ENCODE measurements at regions of chr3 and their contacts with region 1.

Region 1: GRCh38 chr3:28241221-28242160 is at the start of gene CMC1:
- DNase-seq: peak; percentile 95
- ATAC-seq: peak; percentile 98
- H3K4me3 ChIP-seq: peak within 1 kb of the TSS; percentile 70 to 86 (median 84)
- H3K27ac ChIP-seq: peak within 1 kb of the TSS; percentile 82
- H3K4me1 ChIP-seq: peaks cover 61% of the 10 kb centered on the region
- H3K27me3 ChIP-seq: no peaks in the 10 kb centered on the region; a peak in 1 of 5 replicates
- CTCF ChIP-seq: peak; percentile 42; the same call in 1 of the 2 replicates
- EP300 ChIP-seq: peak in 1 of 2 experiments; percentile 54; a peak in 2 of 4 replicates
- POLR2A ChIP-seq: peak; percentile 95 to 97
- RAD21 ChIP-seq: 0 out of 2 replicates have a peak, but pooled peaks have one; percentile 16
- total RNA-seq, gene CMC1: 29.5 and 32.3 TPM in 2 replicates

Region 2: GRCh38 chr3:28114893-28115292 is 126.6 kb before region 1 on chr3:
- CTCF ChIA-PET with region 1: no interaction called
- POLR2A ChIA-PET with region 1: interaction called, 4 read pairs
- in situ Hi-C with region 1: no loop called
- intact Hi-C with region 1: loop called (anchors 2 kb)
- DNase-seq: peak; percentile 90
- ATAC-seq: peak; percentile 100
- H3K4me3 ChIP-seq: no peak overlapping the region
- H3K27ac ChIP-seq: peak overlapping the region; percentile 47
- H3K4me1 ChIP-seq: peaks cover 38% of the 10 kb centered on the region
- H3K27me3 ChIP-seq: no peaks in the 10 kb centered on the region
- CTCF ChIP-seq: no peak
- EP300 ChIP-seq: peak in 1 of 2 experiments; percentile 93; a peak in 2 of 4 replicates
- POLR2A ChIP-seq: no peak
- RAD21 ChIP-seq: no peak

Region 3: DNA sequence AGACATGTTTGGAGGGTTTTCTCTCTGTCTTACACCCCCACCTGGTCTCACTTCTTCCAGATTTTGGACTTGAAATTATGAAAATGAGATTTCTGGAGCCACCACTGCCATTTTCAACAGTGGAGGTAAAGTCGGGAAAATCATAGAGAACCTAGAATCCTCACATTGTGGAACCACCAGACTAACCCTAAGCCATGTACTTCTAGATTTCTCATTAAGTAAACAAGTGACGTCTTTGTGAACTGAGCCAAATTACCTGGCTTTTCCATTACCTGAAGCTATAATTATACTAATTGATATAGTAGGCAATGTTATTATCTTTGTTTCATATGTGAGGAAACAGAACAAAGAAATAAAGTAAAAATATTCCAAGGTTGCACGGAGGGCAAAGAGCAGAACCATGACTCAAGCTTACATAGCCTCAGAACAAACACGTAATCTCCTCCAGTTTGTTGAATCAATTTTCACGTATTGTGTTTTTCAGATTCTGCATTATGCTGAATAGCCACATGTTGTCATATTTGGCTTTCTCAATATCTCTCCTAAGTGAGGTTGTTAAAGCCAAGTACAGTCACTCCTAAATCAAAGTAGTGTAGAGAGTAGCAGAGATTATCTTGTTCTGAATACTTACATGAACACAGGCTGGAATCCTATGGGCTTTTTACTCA is 101.4 kb before region 1 on chr3:
- CTCF ChIA-PET with region 1: no interaction called
- POLR2A ChIA-PET with region 1: interaction called, 4 read pairs
- in situ Hi-C with region 1: no loop called
- intact Hi-C with region 1: loop called (anchors 1 kb)
- DNase-seq: peak; percentile 73
- ATAC-seq: peak; percentile 90
- H3K4me3 ChIP-seq: no peak overlapping the region
- H3K27ac ChIP-seq: no peak overlapping the region
- H3K4me1 ChIP-seq: peaks cover 40% of the 10 kb centered on the region
- H3K27me3 ChIP-seq: no peaks in the 10 kb centered on the region
- CTCF ChIP-seq: no peak
- EP300 ChIP-seq: peak in 1 of 2 experiments; percentile 77; a peak in 2 of 4 replicates
- POLR2A ChIP-seq: no peak
- RAD21 ChIP-seq: no peak

Region 4: GRCh38 chr3:28328188-28329151 is 87.0 kb after region 1 on chr3:
- CTCF ChIA-PET with region 1: no interaction called
- POLR2A ChIA-PET with region 1: no interaction called
- in situ Hi-C with region 1: no loop called
- intact Hi-C with region 1: loop called (anchors 5 kb)
- DNase-seq: no peak
- ATAC-seq: peak; percentile 42; the same call in 1 of the 3 replicates
- H3K4me3 ChIP-seq: no peak overlapping the region
- H3K27ac ChIP-seq: no peak overlapping the region
- H3K4me1 ChIP-seq: peaks cover 30% of the 10 kb centered on the region
- H3K27me3 ChIP-seq: no peaks in the 10 kb centered on the region
- CTCF ChIP-seq: peak; percentile 48
- EP300 ChIP-seq: no peak
- POLR2A ChIP-seq: no peak
- RAD21 ChIP-seq: 0 out of 2 replicates have a peak, but pooled peaks have one; percentile 14

Region 5: DNA sequence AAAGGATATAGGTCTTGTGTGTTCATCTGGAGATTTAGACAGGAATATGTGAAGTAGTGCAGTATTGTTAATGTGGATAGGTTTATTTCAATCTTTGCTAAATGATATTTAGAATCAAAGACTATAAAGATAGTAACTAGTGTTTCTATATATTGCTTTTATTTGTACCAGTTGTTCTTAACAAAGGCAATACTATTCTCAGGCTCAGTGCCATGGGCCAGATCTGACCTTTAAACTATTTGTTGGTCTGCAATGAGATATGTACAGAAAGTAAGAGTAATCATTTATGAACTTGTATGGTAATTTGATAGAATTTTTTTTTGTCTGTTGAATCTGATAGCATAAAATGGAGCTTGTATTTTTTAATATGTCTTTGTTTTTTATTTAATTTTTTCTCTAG is 253.8 kb after region 1 on chr3:
- CTCF ChIA-PET with region 1: no interaction called
- POLR2A ChIA-PET with region 1: no interaction called
- in situ Hi-C with region 1: no loop called
- intact Hi-C with region 1: no loop called
- DNase-seq: no peak
- ATAC-seq: no peak
- H3K4me3 ChIP-seq: no peak overlapping the region
- H3K27ac ChIP-seq: no peak overlapping the region
- H3K4me1 ChIP-seq: no peaks in the 10 kb centered on the region
- H3K27me3 ChIP-seq: no peaks in the 10 kb centered on the region
- CTCF ChIP-seq: no peak
- EP300 ChIP-seq: no peak
- POLR2A ChIP-seq: no peak
- RAD21 ChIP-seq: no peak

Measured in HepG2 (cell line).